ENCODE measurements at regions of chr9 and their contacts with region 1.

Region 1: DNA sequence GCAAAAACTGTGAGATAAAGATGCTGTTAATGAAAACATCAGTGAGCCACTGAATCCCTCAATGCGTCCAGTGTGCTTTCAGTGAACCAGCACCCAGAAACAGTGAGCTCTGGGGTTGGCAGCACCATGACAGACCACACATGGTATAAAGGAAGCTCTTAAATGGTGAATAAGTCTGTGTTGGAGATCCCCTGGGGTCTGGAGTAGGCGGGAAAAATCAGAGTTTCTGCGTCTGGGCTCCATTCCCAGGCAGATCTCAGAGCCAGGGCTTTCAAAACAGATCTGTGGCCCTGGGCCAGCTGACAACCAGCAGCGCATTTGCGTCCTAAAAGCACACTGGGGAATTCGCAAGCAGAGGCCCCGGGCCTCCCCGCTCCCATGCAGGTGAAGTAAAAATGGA is 233.5 kb downstream of the FRMD3 start:
- DNase-seq: no peak
- H3K4me3 ChIP-seq: no peak overlapping the region
- H3K27ac ChIP-seq: no peak overlapping the region
- H3K4me1 ChIP-seq: no peaks in the 10 kb centered on the region
- CTCF ChIP-seq: no peak

Region 2: DNA sequence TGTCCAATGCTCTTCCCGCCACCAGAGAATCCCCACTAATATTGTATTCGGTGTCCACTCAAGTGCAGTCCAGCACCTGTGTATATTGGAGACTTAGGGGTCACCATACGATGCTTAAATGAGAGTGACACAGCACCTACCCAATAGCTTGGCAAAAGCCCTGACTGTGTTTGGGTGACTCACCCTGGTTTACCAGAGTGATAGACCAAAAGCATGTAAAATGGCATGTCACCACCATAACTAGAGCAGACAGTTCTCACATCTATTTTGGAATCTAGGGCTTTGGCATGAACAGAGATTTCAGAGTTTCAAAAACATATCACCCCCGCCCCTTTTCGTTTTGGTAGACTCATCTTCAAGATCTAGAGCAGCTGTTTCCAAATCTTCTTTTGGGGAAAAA is 24.4 kb before region 1 on chr9:
- CTCF ChIA-PET with region 1: interaction called, 10 read pairs
- POLR2A ChIA-PET with region 1: no interaction called
- intact Hi-C with region 1: no loop called
- DNase-seq: no peak
- H3K4me3 ChIP-seq: no peak overlapping the region
- H3K27ac ChIP-seq: no peak overlapping the region
- H3K4me1 ChIP-seq: no peaks in the 10 kb centered on the region
- CTCF ChIP-seq: no peak